ENCODE measurements at regions of chr22 and their contacts with region 1.

Region 1: GRCh38 chr22:26097840-26098239 is 71.4 kb upstream of the SEZ6L start:
- DNase-seq: no peak
- H3K4me3 ChIP-seq: no peak overlapping the region
- H3K27ac ChIP-seq: no peak overlapping the region
- H3K4me1 ChIP-seq: no peaks in the 10 kb centered on the region
- H3K27me3 ChIP-seq: no peaks in the 10 kb centered on the region
- CTCF ChIP-seq: no peak

Region 2: DNA sequence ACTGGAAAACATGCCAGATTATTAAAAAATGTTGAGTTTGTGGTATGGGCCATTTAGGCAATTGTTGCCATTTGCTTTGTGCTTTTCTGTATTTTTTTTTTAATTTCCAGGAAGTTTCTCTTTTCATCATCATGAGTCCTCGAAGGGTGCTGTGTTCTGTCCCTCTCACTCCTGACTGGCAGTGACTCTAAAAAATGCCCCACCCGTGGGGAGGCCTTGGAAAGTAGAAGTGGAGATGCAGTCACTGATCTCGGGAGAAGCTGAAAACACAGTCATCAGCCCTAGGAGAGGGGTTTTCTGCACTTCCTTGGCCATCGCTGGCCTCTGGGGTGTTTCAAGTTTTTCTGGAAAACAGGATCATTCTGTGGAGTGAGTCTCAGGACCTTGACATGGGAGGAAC is 631.9 kb before region 1 on chr22:
- intact Hi-C with region 1: no loop called
- DNase-seq: no peak
- H3K4me3 ChIP-seq: no peak overlapping the region
- H3K27ac ChIP-seq: no peak overlapping the region
- H3K4me1 ChIP-seq: no peaks in the 10 kb centered on the region
- H3K27me3 ChIP-seq: no peaks in the 10 kb centered on the region
- CTCF ChIP-seq: no peak

Region 3: GRCh38 chr22:26038365-26038764 is 59.5 kb before region 1 on chr22:
- intact Hi-C with region 1: loop called (anchors 10 kb)
- DNase-seq: peak in 2 of 5 donors; percentile 4 to 7
- H3K4me3 ChIP-seq: no peak overlapping the region
- H3K27ac ChIP-seq: no peak overlapping the region
- H3K4me1 ChIP-seq: no peaks in the 10 kb centered on the region
- H3K27me3 ChIP-seq: no peaks in the 10 kb centered on the region
- CTCF ChIP-seq: no peak

Region 4: GRCh38 chr22:26245001-26245400 is 147.2 kb after region 1 on chr22:
- intact Hi-C with region 1: no loop called
- DNase-seq: no peak
- H3K4me3 ChIP-seq: no peak overlapping the region
- H3K27ac ChIP-seq: no peak overlapping the region
- H3K4me1 ChIP-seq: no peaks in the 10 kb centered on the region
- H3K27me3 ChIP-seq: no peaks in the 10 kb centered on the region
- CTCF ChIP-seq: no peak

Region 5: GRCh38 chr22:26589845-26590736 is 492.3 kb after region 1 on chr22 and contains the start of gene TPST2:
- intact Hi-C with region 1: no loop called
- DNase-seq: peak; percentile 82 to 92 (median 88)
- H3K4me3 ChIP-seq: peak within 1 kb of the TSS; percentile 62 to 92 (median 80)
- H3K27ac ChIP-seq: peak within 1 kb of the TSS; percentile 85 to 93
- H3K4me1 ChIP-seq: peaks cover 0 to 6% (median 5%) of the 10 kb centered on the region in 3 donors
- H3K27me3 ChIP-seq: no peaks in the 10 kb centered on the region
- CTCF ChIP-seq: no peak
- total RNA-seq, gene TPST2: 40.3 TPM

Measured in kidney (tissue), 22 donors.